ENCODE measurements at regions of chrX and their contacts with region 1.

Region 1: DNA sequence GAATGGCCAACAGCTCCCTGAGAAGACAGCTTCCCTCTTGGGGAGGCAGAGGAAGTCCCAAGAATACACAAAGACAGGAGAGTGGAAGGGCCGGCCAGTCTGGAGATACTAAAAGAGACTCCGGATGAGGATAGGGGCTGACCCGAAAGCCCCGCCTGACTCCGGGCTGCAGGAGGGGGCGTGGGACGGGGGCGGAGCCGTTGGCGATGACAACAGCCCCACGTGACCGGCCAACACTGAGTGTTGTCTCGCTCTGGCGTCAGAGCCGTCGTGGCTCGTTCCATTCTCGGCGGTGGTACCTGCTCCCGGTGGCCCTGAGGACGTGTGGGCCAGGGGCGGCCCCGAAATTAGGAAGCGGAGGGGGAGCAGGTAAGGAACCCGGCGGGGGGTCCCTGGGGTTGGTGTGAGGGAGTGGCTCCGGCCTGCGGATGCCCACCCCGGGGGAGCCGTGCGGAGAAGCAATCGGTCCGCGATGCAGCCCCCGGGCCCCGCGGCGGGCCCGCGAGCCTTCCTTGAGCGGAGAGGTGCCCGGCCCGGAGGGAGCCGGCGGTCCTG is at the start of gene BEX4:
- DNase-seq: peak; percentile 89 to 93
- ATAC-seq: peak; percentile 94
- H3K4me3 ChIP-seq: peak within 1 kb of the TSS; percentile 55 to 79
- H3K27ac ChIP-seq: peak within 1 kb of the TSS in 1 of 2 donors; percentile 13
- H3K4me1 ChIP-seq: no peaks in the 10 kb centered on the region
- H3K27me3 ChIP-seq: no peaks in the 10 kb centered on the region
- total RNA-seq, gene BEX4: 30.6 to 39.6 TPM

Region 2: GRCh38 chrX:103254921-103255493 is 40.1 kb after region 1 on chrX and contains the start of gene TCEAL8:
- intact Hi-C with region 1: loop called (anchors 2 kb)
- DNase-seq: peak; percentile 90 to 93
- ATAC-seq: peak; percentile 93
- H3K4me3 ChIP-seq: peak within 1 kb of the TSS; percentile 46 to 76
- H3K27ac ChIP-seq: peak within 1 kb of the TSS; percentile 0 to 76
- H3K4me1 ChIP-seq: no peaks in the 10 kb centered on the region
- H3K27me3 ChIP-seq: no peaks in the 10 kb centered on the region
- total RNA-seq, gene TCEAL8: 43.4 to 50.1 TPM

Region 3: DNA sequence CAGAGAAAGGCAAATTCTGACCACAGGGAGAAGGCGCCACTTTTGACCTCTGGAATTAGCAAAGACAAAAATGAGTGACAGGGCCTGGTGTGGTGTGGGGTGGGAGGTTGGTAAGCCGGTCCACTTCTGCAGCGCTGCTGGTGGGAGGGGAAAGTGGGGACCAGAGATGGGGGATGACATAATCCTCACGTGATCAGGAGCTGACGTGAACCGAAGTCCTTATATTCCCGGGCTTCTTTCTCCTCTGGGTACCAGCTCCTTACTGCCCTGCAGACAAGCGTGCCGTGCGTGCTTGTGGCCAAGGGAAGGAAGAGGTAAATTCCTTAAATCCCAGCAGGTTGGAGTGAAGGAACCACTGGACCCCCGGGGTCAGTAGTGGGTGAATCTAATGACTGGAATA is 115.0 kb after region 1 on chrX and contains the start of gene TCEAL7:
- intact Hi-C with region 1: loop called in 1 of 2 experiments (anchors 10 kb)
- DNase-seq: peak in 1 of 2 donors; percentile 46
- ATAC-seq: peak; percentile 75
- H3K4me3 ChIP-seq: peak within 1 kb of the TSS; percentile 10 to 18
- H3K27ac ChIP-seq: no peak within 1 kb of the TSS
- H3K4me1 ChIP-seq: no peaks in the 10 kb centered on the region
- H3K27me3 ChIP-seq: no peaks in the 10 kb centered on the region
- total RNA-seq, gene TCEAL7: 8.4 to 12.7 TPM

Region 4: DNA sequence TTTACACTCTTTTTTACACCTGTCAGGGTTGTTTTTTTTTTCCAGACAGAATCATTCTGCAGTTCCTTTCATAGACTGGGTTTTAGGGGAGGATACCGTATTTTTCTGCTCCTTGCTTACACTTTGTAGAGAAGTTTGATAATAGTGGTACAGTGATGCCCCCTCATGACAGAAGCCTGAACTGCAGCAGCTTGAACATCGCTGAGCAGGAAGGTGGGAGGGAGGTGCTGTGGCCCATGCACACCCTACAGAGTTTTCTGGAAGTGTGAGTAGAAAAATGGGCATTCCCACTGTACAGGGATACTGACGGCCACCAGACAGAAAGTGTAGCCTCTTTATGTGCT is 249.8 kb after region 1 on chrX:
- intact Hi-C with region 1: loop called in 1 of 2 experiments (anchors 10 kb)
- DNase-seq: peak; percentile 68 to 86
- ATAC-seq: peak; percentile 91
- H3K4me3 ChIP-seq: peak overlapping the region in 1 of 2 donors; percentile 33
- H3K27ac ChIP-seq: no peak overlapping the region
- H3K4me1 ChIP-seq: no peaks in the 10 kb centered on the region
- H3K27me3 ChIP-seq: no peaks in the 10 kb centered on the region

Measured in aorta (tissue), 5 donors.